HEK293T (cell line): ENCODE measurements at regions of chr5 and their contacts with region 1.

Region 1: DNA sequence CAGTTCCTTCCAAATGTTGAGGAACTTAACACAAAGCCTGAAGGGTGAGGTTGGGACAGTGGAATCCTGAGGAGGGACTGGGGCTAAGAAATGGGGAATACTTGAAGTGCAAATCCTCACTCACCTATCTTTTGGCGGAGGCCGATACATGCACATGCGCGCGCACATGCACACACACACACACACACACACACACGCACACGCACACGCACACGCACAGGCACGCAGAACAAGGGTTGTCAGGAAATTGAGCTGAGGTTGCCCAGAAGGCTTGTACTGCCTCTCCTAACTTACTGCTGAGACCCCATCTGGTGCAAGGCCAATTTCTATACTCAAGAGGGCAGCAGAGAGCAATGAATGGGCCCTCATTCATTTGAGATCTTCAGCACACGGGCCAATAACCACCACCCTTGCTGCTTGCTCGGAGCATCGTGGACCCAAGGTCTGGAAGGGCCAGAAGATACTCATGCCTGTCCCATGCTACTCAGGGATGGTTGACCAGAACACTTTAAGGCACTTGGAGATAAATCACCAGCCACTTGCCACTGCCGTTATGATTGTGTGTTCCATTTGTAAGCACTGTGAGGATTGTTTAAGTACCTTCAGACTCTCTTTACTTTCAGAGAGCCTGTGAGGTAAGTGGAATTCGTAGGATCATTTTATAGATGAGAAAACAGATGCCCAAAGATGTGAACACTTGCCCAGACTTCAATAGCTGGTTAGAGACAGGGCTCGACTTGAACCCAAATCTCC is 21.5 kb downstream of the BTF3 start:
- DNase-seq: peak; percentile 87

Region 2: GRCh38 chr5:73137563-73138530 is 381.9 kb before region 1 on chr5:
- CTCF ChIA-PET with region 1: interaction called, 13 read pairs
- POLR2A ChIA-PET with region 1: no interaction called
- DNase-seq: no peak

Region 3: DNA sequence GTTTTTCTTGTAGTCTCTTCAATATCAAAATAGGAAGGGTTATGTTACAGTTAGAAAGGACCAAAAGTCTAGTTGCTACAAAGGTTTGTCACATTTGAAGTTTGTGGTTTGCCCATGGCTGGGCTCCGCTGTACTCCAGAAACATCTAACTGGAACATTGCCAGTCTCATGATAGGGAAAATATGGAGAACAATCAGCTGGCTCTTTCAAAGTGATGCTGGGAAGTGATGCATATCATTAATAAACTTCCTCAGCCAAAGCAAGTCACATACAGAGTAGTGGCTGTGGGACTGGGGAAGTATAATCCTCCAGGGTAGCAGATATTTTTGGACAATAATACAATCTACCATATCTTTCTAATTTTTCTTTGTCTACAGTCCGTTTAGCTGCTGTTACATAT is 12.6 kb before region 1 on chr5:
- CTCF ChIA-PET with region 1: no interaction called
- POLR2A ChIA-PET with region 1: no interaction called
- DNase-seq: no peak